Ascending aorta (tissue), 2 donors: ENCODE measurements at regions of chr16 and their contacts with region 1.

Region 1: GRCh38 chr16:85162478-85163277 is 50.4 kb upstream of the CIBAR2 start:
- DNase-seq: peak in 1 of 2 donors; percentile 89
- H3K4me3 ChIP-seq: no peak overlapping the region
- H3K27ac ChIP-seq: peak overlapping the region; percentile 66 to 84
- H3K4me1 ChIP-seq: peaks cover 4 to 42% of the 10 kb centered on the region in 2 donors
- H3K27me3 ChIP-seq: no peaks in the 10 kb centered on the region
- CTCF ChIP-seq: no peak

Region 2: GRCh38 chr16:85151603-85152413 is 10.9 kb before region 1 on chr16:
- intact Hi-C with region 1: loop called (anchors 1 kb)
- DNase-seq: peak; percentile 58 to 91
- H3K4me3 ChIP-seq: no peak overlapping the region
- H3K27ac ChIP-seq: peak overlapping the region; percentile 50 to 76
- H3K4me1 ChIP-seq: peaks cover 20 to 36% of the 10 kb centered on the region in 2 donors
- H3K27me3 ChIP-seq: no peaks in the 10 kb centered on the region
- CTCF ChIP-seq: no peak

Region 3: DNA sequence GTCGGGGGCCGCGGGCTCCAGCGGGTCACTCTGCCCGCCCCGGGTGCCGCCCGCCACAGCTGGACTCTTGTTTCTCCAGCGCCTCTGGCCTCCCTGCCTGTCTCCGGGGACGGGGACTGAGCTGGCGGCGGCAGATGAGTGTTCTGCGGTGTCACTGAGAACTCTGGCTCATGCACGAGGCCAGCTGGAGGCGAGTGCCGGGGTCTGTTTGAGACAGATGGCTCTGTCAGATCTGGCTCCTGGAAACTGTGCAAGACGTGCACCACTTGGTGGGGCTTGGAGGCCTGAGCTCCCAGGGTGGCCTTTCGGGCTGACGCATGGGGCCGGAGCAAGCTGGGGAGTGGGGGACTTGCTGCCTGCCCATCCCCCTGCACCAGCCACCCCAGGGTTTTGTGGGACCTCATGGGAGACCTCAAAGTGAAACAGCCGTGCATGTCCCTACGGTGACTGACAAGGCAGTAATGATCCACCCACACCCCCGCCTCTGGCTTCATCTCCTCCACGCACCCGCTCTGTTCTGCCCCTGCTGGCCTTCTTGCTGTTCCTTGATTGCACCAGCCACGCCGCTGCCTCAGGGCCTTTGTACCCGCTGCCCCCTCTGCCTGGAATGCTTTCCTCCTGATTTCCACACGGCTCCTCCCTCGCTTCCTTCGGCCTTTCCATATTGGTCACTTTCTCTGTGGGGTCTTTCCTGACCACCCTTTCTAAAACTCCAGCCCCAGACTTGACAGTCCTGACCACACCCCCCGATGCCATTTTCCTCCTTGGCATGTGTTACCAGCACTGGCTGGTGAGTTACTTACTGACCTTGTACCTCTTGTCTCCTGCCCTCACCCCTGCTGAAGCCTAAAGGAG is 124.5 kb after region 1 on chr16:
- intact Hi-C with region 1: no loop called
- DNase-seq: no peak
- H3K4me3 ChIP-seq: peak overlapping the region; percentile 7 to 46
- H3K27ac ChIP-seq: peak overlapping the region; percentile 20 to 57
- H3K4me1 ChIP-seq: peaks cover 8 to 14% of the 10 kb centered on the region in 2 donors
- H3K27me3 ChIP-seq: no peaks in the 10 kb centered on the region
- CTCF ChIP-seq: no peak